ENCODE measurements at regions of chr13 and their contacts with region 1.

Region 1: DNA sequence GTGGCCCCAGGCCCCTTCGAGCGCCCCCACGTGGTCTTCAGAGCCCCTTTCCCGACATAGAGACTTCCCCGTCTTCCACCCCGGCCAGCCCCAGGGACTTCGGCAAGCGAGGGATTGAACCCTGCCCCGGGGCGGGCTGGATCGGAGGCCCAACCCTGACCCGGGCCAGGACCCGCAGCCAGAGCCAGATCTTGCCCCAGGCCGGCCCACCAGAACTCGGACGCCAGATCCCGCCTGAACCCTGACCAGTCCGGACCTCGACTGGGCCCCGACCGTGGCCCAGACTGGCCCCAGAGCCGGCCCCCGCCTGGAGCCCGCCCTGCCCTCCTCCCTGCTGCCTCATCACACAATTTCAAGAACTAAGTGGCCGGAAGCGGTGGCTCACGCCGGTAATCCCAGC is 253 bp upstream of the TPTE2 start:
- DNase-seq: no peak
- H3K4me3 ChIP-seq: no peak overlapping the region
- H3K4me1 ChIP-seq: no peaks in the 10 kb centered on the region
- H3K27me3 ChIP-seq: no peaks in the 10 kb centered on the region

Region 2: DNA sequence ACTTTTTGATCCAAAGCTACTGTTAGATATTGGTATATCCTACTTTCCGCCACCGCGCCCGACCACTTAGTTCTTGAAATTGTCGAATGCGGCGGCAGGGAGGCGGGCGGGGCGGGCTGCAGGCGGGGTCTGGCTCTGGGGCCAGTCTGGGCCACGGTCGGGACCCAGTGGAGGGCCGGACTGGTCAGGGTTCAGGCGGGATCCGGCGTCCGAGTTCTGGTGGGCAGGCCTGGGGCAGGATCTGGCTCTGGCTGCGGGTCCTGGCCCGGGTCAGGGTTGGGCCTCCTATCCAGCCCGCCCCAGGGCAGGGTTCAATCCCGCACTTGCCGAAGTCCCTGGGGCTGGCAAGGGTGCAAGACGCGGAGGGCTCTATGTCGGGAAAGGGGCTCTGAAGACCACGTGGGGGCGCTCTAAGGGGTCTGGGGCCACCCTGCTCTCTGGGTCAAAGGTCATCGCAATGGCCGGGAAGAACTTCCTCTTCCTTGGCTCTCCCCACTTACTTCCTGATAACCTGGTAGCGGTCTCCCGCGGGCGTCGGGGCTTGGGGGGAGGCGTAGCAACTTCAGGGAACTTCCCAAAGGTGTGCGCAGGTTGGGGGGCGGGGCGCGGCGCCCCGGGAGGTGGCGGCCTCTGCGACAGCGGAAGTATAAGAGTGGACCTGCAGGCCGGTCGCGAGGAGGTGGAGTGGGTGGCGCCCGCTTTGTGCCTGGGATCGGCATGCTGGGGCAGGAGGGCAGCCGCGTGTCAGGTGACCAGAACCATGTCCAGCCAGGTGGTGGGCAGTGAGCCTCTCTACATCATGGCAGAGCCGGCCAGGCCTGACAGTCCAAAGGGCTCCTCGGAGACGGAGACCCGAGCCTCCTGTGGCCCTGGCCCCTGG is 1698.2 kb after region 1 on chr13:
- in situ Hi-C with region 1: loop called (anchors 5 kb)
- DNase-seq: no peak
- H3K4me3 ChIP-seq: no peak overlapping the region
- H3K4me1 ChIP-seq: no peaks in the 10 kb centered on the region
- H3K27me3 ChIP-seq: no peaks in the 10 kb centered on the region